ENCODE measurements at regions of chr11 and their contacts with region 1.

Region 1: DNA sequence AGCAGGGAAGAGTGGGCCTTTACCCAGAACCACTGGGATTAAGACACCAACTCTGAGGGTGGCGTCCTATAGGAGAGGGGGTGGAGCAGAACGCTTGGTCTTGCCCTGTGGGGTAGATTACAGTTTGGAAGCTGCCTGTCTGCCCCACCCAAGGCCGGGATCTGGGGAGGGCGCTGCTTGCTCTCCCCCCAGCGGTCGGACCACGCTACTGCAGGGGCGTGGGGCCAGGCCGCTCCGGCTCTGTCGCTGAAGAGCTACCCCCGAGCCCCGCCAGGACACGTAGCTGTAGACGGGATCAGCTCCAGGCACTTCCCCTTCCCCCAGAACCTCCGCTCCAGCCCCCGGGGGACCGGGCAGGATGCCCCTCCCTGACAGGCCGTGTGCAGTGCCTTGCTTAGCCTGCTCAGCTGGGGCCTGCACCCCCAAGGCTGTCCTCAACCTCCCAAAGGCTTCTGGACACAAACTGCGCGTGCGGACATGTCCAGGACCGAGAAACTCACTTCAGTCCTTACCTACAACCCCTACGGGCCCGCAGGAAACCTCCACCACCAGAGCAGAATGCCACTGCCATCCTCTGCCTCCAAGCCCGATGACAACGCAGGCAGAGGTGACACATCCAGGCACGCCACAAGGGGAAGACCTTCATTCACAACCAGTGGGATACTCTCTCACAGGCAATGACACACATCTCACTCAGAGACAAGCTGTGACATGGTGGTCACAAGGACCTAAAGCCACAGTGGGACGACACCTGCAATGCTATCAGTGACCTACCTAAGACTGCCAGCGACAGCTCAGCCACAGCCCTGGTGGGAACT is 3.6 kb downstream of the AHNAK start:
- DNase-seq: peak; percentile 51
- ATAC-seq: peak; percentile 48
- H3K4me3 ChIP-seq: peak overlapping the region; percentile 84
- H3K27ac ChIP-seq: peak overlapping the region; percentile 95
- H3K4me1 ChIP-seq: peaks cover 77% of the 10 kb centered on the region
- H3K27me3 ChIP-seq: no peaks in the 10 kb centered on the region; a peak in 2 of 4 replicates
- CTCF ChIP-seq: peak; percentile 97 to 99 (median 97)
- EP300 ChIP-seq: no peak
- POLR2A ChIP-seq: no peak
- RAD21 ChIP-seq: peak; percentile 81

Region 2: GRCh38 chr11:62419314-62419929 is 123.5 kb before region 1 on chr11:
- CTCF ChIA-PET with region 1: interaction called, 280 read pairs
- POLR2A ChIA-PET with region 1: interaction called, 20 read pairs
- RAD21 ChIA-PET with region 1: interaction called, 146 read pairs
- SMC1A ChIA-PET with region 1: interaction called, 116 read pairs
- in situ Hi-C with region 1: no loop called
- intact Hi-C with region 1: loop called (anchors 1 kb)
- DNase-seq: no peak
- ATAC-seq: no peak
- H3K4me3 ChIP-seq: no peak overlapping the region
- H3K27ac ChIP-seq: no peak overlapping the region
- H3K4me1 ChIP-seq: no peaks in the 10 kb centered on the region
- H3K27me3 ChIP-seq: no peaks in the 10 kb centered on the region; a peak in 1 of 4 replicates
- CTCF ChIP-seq: no peak
- EP300 ChIP-seq: no peak
- POLR2A ChIP-seq: no peak
- RAD21 ChIP-seq: no peak

Region 3: DNA sequence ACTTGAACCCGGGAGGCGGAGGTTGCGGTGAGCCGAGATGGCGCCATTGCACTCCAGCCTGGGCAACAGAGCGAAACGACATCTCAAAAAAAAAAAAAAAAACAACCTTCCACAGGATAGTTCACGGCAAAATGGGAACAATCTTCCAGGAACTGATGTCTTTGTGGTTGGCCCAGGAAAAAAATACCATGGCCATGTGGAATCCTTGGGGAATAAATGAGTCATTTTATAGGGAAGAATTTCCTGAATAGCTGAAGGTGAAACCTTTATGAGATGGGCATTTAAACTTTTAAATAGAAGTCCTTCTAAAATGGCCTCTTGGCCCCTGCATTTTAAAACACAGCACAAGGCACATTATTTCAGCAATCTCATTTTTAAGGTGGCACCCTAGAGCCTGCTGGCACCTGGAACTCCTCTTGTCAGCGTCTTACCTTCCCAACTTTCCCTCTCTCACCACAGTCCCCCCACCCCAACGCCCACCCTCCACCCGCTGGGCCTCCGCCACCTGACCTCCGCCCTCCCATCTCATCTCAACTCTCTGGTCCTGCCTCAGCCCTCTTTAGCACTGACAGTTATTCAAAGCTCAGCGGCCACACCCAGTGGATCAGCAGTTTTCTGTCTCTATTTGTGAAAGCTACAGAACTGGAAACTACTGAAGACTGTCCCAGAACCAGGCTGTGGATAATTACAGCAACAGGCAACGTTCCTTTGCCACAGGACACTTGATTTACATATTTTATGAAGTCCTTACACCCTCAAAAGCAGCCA is 81.0 kb before region 1 on chr11:
- CTCF ChIA-PET with region 1: interaction called, 42 read pairs
- POLR2A ChIA-PET with region 1: interaction called, 5 read pairs
- RAD21 ChIA-PET with region 1: interaction called, 12 read pairs
- SMC1A ChIA-PET with region 1: interaction called, 16 read pairs
- in situ Hi-C with region 1: no loop called
- intact Hi-C with region 1: loop called (anchors 2 kb)
- DNase-seq: no peak
- ATAC-seq: no peak
- H3K4me3 ChIP-seq: no peak overlapping the region
- H3K27ac ChIP-seq: no peak overlapping the region
- H3K4me1 ChIP-seq: peaks cover 9% of the 10 kb centered on the region; the same call in 1 of the 2 replicates
- H3K27me3 ChIP-seq: no peaks in the 10 kb centered on the region
- CTCF ChIP-seq: no peak
- EP300 ChIP-seq: no peak
- POLR2A ChIP-seq: no peak
- RAD21 ChIP-seq: no peak

Region 4: GRCh38 chr11:62497132-62497915 is 45.6 kb before region 1 on chr11:
- CTCF ChIA-PET with region 1: interaction called, 52 read pairs
- POLR2A ChIA-PET with region 1: interaction called, 5 read pairs
- RAD21 ChIA-PET with region 1: interaction called, 14 read pairs
- SMC1A ChIA-PET with region 1: interaction called, 20 read pairs
- in situ Hi-C with region 1: no loop called
- intact Hi-C with region 1: no loop called
- DNase-seq: peak; percentile 13
- ATAC-seq: peak; percentile 75
- H3K4me3 ChIP-seq: no peak overlapping the region
- H3K27ac ChIP-seq: no peak overlapping the region
- H3K4me1 ChIP-seq: no peaks in the 10 kb centered on the region
- H3K27me3 ChIP-seq: peaks cover 0 to 2% of the 10 kb centered on the region in 2 experiments; a peak in 1 of 4 replicates
- CTCF ChIP-seq: peak; percentile 31 to 53 (median 37); a peak in 4 of 6 replicates
- EP300 ChIP-seq: no peak
- POLR2A ChIP-seq: no peak
- RAD21 ChIP-seq: peak; percentile 57

Region 5: GRCh38 chr11:62556108-62556871 is 13.3 kb after region 1 on chr11:
- CTCF ChIA-PET with region 1: interaction called, 246 read pairs
- POLR2A ChIA-PET with region 1: interaction called, 188 read pairs
- RAD21 ChIA-PET with region 1: interaction called, 313 read pairs
- SMC1A ChIA-PET with region 1: interaction called, 212 read pairs
- in situ Hi-C with region 1: no loop called
- intact Hi-C with region 1: loop called (anchors 1 kb)
- DNase-seq: peak; percentile 88
- ATAC-seq: peak; percentile 74
- H3K4me3 ChIP-seq: peak overlapping the region; percentile 42
- H3K27ac ChIP-seq: peak overlapping the region; percentile 99
- H3K4me1 ChIP-seq: peaks cover 88% of the 10 kb centered on the region
- H3K27me3 ChIP-seq: no peaks in the 10 kb centered on the region
- CTCF ChIP-seq: no peak
- EP300 ChIP-seq: peak in 1 of 2 experiments; percentile 11; a peak in 1 of 4 replicates
- POLR2A ChIP-seq: peak; percentile 66; the same call in 1 of the 2 replicates
- RAD21 ChIP-seq: no peak

Region 6: DNA sequence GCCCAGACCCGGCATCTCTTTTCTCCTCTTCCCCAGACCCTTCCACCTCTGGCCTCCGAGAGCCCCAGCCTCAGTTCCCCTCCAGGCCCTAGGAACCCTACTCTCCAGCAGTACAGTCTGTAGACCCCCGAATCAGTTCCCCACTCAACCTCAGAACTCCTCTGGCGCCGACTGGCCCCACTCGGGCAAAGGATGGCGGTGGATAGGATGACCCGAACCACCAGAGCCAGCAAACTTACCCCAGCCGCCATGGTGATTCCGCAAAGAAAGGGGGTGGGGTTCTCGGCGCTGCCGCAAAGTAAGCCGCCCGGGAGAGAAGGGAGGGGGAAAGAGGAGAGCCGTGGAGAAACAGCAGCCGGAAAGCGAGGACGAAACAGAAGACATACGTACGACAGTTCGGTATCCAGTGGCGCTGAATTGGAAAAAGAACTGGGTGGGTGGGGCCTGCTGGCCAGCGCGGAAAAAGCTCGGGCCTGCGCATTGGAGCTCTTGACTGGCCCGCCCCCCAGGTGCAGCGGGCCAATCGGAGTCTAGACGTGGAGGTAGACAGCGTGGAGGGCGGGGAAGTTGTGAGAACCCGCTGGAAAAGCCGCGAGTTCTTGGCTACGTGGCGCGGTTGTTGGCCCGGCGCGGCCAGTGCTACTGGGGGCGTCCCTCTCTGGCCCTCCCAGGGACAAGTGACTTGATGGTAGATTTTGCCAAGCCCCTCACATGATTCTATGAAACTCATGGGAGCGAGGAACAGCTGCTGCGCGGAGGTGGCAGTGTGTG is 30.8 kb after region 1 on chr11 and contains the start of gene EEF1G:
- CTCF ChIA-PET with region 1: interaction called, 23 read pairs
- POLR2A ChIA-PET with region 1: interaction called, 6 read pairs
- RAD21 ChIA-PET with region 1: interaction called, 16 read pairs
- SMC1A ChIA-PET with region 1: interaction called, 9 read pairs
- in situ Hi-C with region 1: no loop called
- intact Hi-C with region 1: no loop called
- DNase-seq: peak; percentile 99
- ATAC-seq: peak; percentile 96
- H3K4me3 ChIP-seq: peak within 1 kb of the TSS; percentile 99
- H3K27ac ChIP-seq: peak within 1 kb of the TSS; percentile 93
- H3K4me1 ChIP-seq: peaks cover 24% of the 10 kb centered on the region
- H3K27me3 ChIP-seq: no peaks in the 10 kb centered on the region
- CTCF ChIP-seq: no peak
- EP300 ChIP-seq: peak in 1 of 2 experiments; percentile 51; a peak in 1 of 4 replicates
- POLR2A ChIP-seq: peak; percentile 93
- RAD21 ChIP-seq: no peak
- polyA plus RNA-seq, gene EEF1G: 1,227 to 1,233 TPM

Region 7: GRCh38 chr11:63177872-63178271 is 634.9 kb after region 1 on chr11:
- CTCF ChIA-PET with region 1: no interaction called
- POLR2A ChIA-PET with region 1: no interaction called
- RAD21 ChIA-PET with region 1: no interaction called
- SMC1A ChIA-PET with region 1: no interaction called
- in situ Hi-C with region 1: no loop called
- intact Hi-C with region 1: no loop called
- DNase-seq: no peak
- ATAC-seq: no peak
- H3K4me3 ChIP-seq: no peak overlapping the region
- H3K27ac ChIP-seq: no peak overlapping the region
- H3K4me1 ChIP-seq: no peaks in the 10 kb centered on the region
- H3K27me3 ChIP-seq: no peaks in the 10 kb centered on the region
- CTCF ChIP-seq: no peak
- EP300 ChIP-seq: no peak
- POLR2A ChIP-seq: no peak
- RAD21 ChIP-seq: no peak